Calu3 (cell line): ENCODE measurements at regions of chr1 and their contacts with region 1.

Region 1: GRCh38 chr1:176149939-176150807 is 56.9 kb downstream of the COP1 start:
- DNase-seq: peak; percentile 12
- H3K4me3 Mint-ChIP-seq: peak overlapping the region; percentile 33
- H3K27ac Mint-ChIP-seq: peak overlapping the region; percentile 43
- H3K4me1 Mint-ChIP-seq: peaks cover 18% of the 10 kb centered on the region
- H3K27me3 Mint-ChIP-seq: no peaks in the 10 kb centered on the region
- CTCF ChIP-seq: no peak

Region 2: GRCh38 chr1:176134666-176135065 is 15.5 kb before region 1 on chr1:
- CTCF ChIA-PET with region 1: no interaction called
- intact Hi-C with region 1: loop called (anchors 2 kb)
- DNase-seq: no peak
- H3K4me3 Mint-ChIP-seq: no peak overlapping the region
- H3K27ac Mint-ChIP-seq: no peak overlapping the region
- H3K4me1 Mint-ChIP-seq: no peaks in the 10 kb centered on the region
- H3K27me3 Mint-ChIP-seq: no peaks in the 10 kb centered on the region
- CTCF ChIP-seq: no peak

Region 3: GRCh38 chr1:176199707-176200106 is 49.5 kb after region 1 on chr1:
- CTCF ChIA-PET with region 1: no interaction called
- intact Hi-C with region 1: loop called (anchors 5 kb)
- DNase-seq: no peak
- H3K4me3 Mint-ChIP-seq: no peak overlapping the region
- H3K27ac Mint-ChIP-seq: no peak overlapping the region
- H3K4me1 Mint-ChIP-seq: peaks cover 37% of the 10 kb centered on the region
- H3K27me3 Mint-ChIP-seq: no peaks in the 10 kb centered on the region
- CTCF ChIP-seq: no peak